Activated naive CD4-positive, alpha-beta T cell treated with anti-CD3 and anti-CD28 coated beads, Interleukin-2, amount 10 ng/mL, durations not matched to agents 7 days and 5 days (primary cell): ENCODE measurements at regions of chr19 and their contacts with region 1.

Region 1: DNA sequence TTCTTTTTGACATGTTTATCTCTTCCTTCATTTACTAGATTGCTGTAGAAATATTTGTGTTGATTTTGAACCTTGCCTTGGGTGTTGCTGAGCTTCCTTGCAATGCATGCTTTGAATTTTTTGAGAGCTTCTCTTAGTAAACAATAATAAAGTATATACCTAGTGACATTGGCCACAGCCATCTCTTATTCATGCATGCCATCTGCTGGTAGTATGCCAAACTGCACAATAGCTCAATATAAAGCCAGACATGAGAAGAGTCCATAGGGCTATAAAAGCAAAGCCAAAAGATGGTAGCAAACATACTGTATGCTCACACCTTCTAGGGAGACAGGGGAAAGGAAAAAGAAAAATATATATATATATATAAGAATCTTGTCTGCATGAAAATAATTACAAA is 18.9 kb upstream of the ZSCAN5A start:
- DNase-seq: peak; percentile 69
- H3K4me3 Mint-ChIP-seq: no peak overlapping the region
- H3K27ac Mint-ChIP-seq: no peak overlapping the region
- H3K4me1 Mint-ChIP-seq: no peaks in the 10 kb centered on the region
- H3K27me3 Mint-ChIP-seq: no peaks in the 10 kb centered on the region

Region 2: GRCh38 chr19:56066152-56067023 is 267.1 kb before region 1 on chr19:
- CTCF ChIA-PET with region 1: interaction called, 14 read pairs
- DNase-seq: peak; percentile 76
- H3K4me3 Mint-ChIP-seq: peak overlapping the region; percentile 59
- H3K27ac Mint-ChIP-seq: no peak overlapping the region
- H3K4me1 Mint-ChIP-seq: peaks cover 13% of the 10 kb centered on the region
- H3K27me3 Mint-ChIP-seq: peaks cover 19% of the 10 kb centered on the region

Region 3: DNA sequence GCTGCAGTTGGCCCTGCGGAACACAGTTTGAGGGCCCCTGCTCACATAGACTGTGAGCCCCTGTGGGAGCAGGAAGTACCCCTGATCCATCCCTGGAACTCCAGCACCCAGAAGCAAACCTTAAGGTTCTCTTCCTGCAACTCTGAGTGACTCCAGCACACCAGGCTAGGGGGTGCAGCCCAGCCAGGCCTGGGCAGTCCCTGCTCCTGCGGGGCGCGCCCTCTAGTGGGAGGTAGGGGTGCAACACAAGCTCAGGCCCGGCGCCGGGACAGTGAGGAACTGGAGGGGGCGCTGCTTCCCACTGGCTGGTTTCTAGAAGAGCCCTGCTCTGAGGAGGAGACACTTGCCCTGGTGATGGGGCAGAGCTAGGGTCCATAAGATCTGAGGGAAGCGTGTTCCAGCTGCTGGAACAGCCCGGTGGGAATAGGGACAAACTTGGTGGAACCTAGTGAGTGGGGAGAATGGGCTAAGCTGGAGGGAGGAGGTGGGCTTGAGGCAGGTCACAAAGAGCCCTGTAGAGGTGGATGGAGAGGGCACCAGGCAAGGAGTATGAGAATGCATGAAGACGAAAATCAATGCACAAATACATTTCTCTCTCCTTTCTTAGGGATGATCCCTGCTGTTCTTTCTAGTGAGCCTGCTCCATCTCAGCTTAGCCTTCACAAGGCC is 23.9 kb before region 1 on chr19:
- CTCF ChIA-PET with region 1: interaction called, 10 read pairs
- DNase-seq: peak; percentile 66
- H3K4me3 Mint-ChIP-seq: no peak overlapping the region
- H3K27ac Mint-ChIP-seq: no peak overlapping the region
- H3K4me1 Mint-ChIP-seq: peaks cover 30% of the 10 kb centered on the region
- H3K27me3 Mint-ChIP-seq: no peaks in the 10 kb centered on the region

Region 4: GRCh38 chr19:56383826-56384605 is 50.5 kb after region 1 on chr19:
- CTCF ChIA-PET with region 1: no interaction called
- DNase-seq: no peak
- H3K4me3 Mint-ChIP-seq: no peak overlapping the region
- H3K27ac Mint-ChIP-seq: no peak overlapping the region
- H3K4me1 Mint-ChIP-seq: peaks cover 4% of the 10 kb centered on the region
- H3K27me3 Mint-ChIP-seq: no peaks in the 10 kb centered on the region